ENCODE measurements at regions of chr12 and their contacts with region 1.

Region 1: DNA sequence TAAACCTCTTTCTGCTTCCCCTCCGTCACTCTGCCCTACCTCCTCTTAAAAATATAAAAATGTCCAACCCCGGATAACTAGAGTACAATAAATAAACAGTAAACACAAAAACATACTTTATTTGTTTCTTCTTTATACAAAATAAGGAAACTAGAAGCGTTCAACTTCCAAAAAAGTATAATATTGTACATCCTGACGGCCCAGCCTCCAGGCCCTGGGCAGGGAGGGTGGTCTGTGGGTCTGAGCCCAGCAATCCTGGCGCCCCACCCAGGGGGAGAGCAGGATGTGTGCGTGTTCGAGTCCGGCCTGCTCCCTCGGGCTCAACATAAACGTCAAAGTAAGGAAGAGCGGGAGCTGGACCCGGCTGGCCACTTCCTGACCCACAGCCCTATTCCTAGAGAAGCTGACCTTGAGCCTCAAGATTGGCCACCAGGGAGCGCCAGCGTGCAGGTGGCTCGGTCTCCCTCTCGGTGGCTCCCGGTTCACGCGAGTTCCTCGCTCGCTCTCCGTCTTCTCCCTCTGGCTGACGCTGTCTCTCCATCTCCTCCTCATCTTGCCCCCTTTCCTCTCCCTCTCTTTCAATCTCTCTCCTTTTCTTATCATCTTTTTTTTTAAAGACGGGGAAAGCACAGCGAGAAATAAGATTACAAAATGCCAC is 9.4 kb downstream of the LHX5 start:
- DNase-seq: peak; percentile 61
- H3K4me3 ChIP-seq: no peak overlapping the region
- H3K27ac ChIP-seq: no peak overlapping the region
- H3K4me1 ChIP-seq: peaks cover 27% of the 10 kb centered on the region
- CTCF ChIP-seq: peak; percentile 79

Region 2: GRCh38 chr12:113413488-113413939 is 48.7 kb before region 1 on chr12:
- CTCF ChIA-PET with region 1: no interaction called
- POLR2A ChIA-PET with region 1: no interaction called
- intact Hi-C with region 1: no loop called
- DNase-seq: no peak
- H3K4me3 ChIP-seq: no peak overlapping the region
- H3K27ac ChIP-seq: no peak overlapping the region
- H3K4me1 ChIP-seq: peaks cover 9% of the 10 kb centered on the region
- CTCF ChIP-seq: no peak

Region 3: DNA sequence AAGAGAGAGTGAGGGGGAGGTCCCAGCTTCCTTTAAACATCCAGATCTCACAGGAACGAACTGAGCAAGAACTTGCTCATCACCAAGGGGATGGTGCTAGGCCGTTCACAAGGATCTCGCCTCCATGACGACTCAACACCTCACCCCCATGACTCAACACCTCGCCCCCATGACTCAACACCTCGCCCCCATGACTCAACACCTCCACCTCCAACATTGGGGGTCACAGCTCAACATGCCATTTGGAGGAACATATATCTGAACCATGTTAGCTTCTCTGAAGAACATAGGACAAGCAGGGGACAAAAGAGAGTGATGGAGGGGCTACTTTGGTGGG is 75.5 kb after region 1 on chr12:
- CTCF ChIA-PET with region 1: no interaction called
- POLR2A ChIA-PET with region 1: no interaction called
- intact Hi-C with region 1: no loop called
- DNase-seq: no peak
- H3K4me3 ChIP-seq: no peak overlapping the region
- H3K27ac ChIP-seq: no peak overlapping the region
- H3K4me1 ChIP-seq: no peaks in the 10 kb centered on the region
- CTCF ChIP-seq: no peak

Region 4: GRCh38 chr12:113933201-113933786 is 471.0 kb after region 1 on chr12:
- CTCF ChIA-PET with region 1: interaction called, 16 read pairs
- POLR2A ChIA-PET with region 1: no interaction called
- intact Hi-C with region 1: no loop called
- DNase-seq: no peak
- H3K4me3 ChIP-seq: no peak overlapping the region
- H3K27ac ChIP-seq: no peak overlapping the region
- H3K4me1 ChIP-seq: no peaks in the 10 kb centered on the region
- CTCF ChIP-seq: no peak

Measured in OCI-LY7 (cell line).